ENCODE measurements at regions of chr1 and their contacts with region 1.

Region 1: DNA sequence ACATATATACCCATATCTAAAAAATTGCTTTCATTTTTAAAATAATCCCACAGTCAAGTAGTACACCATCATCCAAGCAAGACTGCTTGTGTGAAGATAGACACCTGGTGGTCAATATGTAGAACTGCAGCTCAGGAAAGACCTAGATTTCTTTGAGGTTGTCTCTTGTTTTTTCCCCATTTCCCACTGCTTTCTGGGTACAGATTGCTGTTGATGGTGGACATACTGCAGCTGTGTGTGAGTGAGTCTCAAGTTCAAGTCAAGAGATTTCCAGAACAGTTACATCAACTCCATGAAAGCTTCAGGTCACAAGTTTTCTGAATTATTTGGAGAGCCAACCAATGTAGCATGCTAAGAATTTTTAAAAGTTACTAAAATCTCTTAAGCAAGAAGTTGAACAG is 306.4 kb downstream of the DUSP10 start:
- DNase-seq: no peak
- H3K4me3 ChIP-seq: no peak overlapping the region
- CTCF ChIP-seq: peak; percentile 78

Region 2: GRCh38 chr1:220873868-220874655 is 561.4 kb before region 1 on chr1:
- CTCF ChIA-PET with region 1: interaction called, 64 read pairs
- POLR2A ChIA-PET with region 1: no interaction called
- DNase-seq: no peak
- H3K4me3 ChIP-seq: no peak overlapping the region
- CTCF ChIP-seq: peak; percentile 70

Region 3: GRCh38 chr1:221272940-221273339 is 162.6 kb before region 1 on chr1:
- CTCF ChIA-PET with region 1: interaction called, 14 read pairs
- POLR2A ChIA-PET with region 1: no interaction called
- DNase-seq: no peak
- H3K4me3 ChIP-seq: no peak overlapping the region
- CTCF ChIP-seq: no peak

Region 4: GRCh38 chr1:221521686-221522085 is 86.2 kb after region 1 on chr1:
- CTCF ChIA-PET with region 1: no interaction called
- POLR2A ChIA-PET with region 1: no interaction called
- DNase-seq: no peak
- H3K4me3 ChIP-seq: no peak overlapping the region
- CTCF ChIP-seq: no peak